Mammary epithelial cell (primary cell): ENCODE measurements at regions of chr1 and their contacts with region 1.

Region 1: DNA sequence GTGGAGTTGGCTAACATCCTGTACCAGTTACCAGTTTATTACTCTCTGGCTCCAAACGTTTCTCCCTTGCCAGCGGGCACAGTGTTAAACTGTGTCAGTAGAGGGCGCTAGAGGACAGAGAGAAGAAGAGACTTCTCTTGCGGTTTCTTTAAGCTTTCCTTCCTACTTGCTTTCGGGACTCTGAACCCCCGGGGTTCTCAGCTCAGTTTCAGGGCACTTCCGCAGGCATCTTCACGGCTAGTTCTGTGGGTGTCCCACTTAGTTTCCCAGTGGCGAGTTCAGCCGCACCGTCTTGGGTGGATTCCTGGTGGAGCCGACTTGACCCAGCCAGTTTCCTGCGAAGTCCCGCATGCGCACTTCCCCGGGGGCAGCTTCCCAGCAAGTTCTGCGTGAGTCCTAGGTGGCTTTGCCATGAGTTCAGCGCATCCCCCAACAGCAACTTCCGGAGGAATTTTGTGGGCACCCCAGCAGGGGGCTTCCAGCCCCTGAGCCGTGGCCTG is 37.9 kb upstream of the BTG2 start:
- DNase-seq: peak; percentile 78
- H3K4me3 ChIP-seq: peak overlapping the region; percentile 12 to 52 (median 52)
- H3K27ac ChIP-seq: peak overlapping the region; percentile 1
- H3K4me1 ChIP-seq: peaks cover 2% of the 10 kb centered on the region
- H3K27me3 ChIP-seq: no peaks in the 10 kb centered on the region
- CTCF ChIP-seq: peak; percentile 92 to 94

Region 2: GRCh38 chr1:203031467-203031866 is 235.9 kb before region 1 on chr1:
- CTCF ChIA-PET with region 1: no interaction called
- dilution Hi-C with region 1: loop called (anchors 10 kb)
- in situ Hi-C with region 1: loop called in 1 of 2 experiments (anchors 5 kb)
- intact Hi-C with region 1: no loop called
- DNase-seq: no peak
- H3K4me3 ChIP-seq: no peak overlapping the region
- H3K27ac ChIP-seq: no peak overlapping the region
- H3K4me1 ChIP-seq: peaks cover 7% of the 10 kb centered on the region
- H3K27me3 ChIP-seq: no peaks in the 10 kb centered on the region
- CTCF ChIP-seq: peak; percentile 50 to 54

Region 3: GRCh38 chr1:203172128-203173010 is 95.0 kb before region 1 on chr1:
- CTCF ChIA-PET with region 1: no interaction called
- dilution Hi-C with region 1: no loop called
- in situ Hi-C with region 1: no loop called
- intact Hi-C with region 1: loop called (anchors 1 kb)
- DNase-seq: peak; percentile 40
- H3K4me3 ChIP-seq: no peak overlapping the region
- H3K27ac ChIP-seq: no peak overlapping the region
- H3K4me1 ChIP-seq: peaks cover 5% of the 10 kb centered on the region
- H3K27me3 ChIP-seq: no peaks in the 10 kb centered on the region
- CTCF ChIP-seq: peak; percentile 97 to 98